Activated naive CD4-positive, alpha-beta T cell treated with anti-CD3 and anti-CD28 coated beads for 36 hours (primary cell): ENCODE measurements at regions of chr15 and their contacts with region 1.

Region 1: GRCh38 chr15:42010434-42010833 is 10.4 kb downstream of the PLA2G4E start:
- DNase-seq: peak; percentile 61
- H3K4me3 Mint-ChIP-seq: no peak overlapping the region
- H3K27ac Mint-ChIP-seq: peak overlapping the region; percentile 38
- H3K4me1 Mint-ChIP-seq: peaks cover 25% of the 10 kb centered on the region
- H3K27me3 Mint-ChIP-seq: no peaks in the 10 kb centered on the region

Region 2: GRCh38 chr15:42035435-42035761 is 25.0 kb after region 1 on chr15:
- CTCF ChIA-PET with region 1: no interaction called
- intact Hi-C with region 1: loop called (anchors 2 kb)
- DNase-seq: peak; percentile 73
- H3K4me3 Mint-ChIP-seq: peak overlapping the region; percentile 3
- H3K27ac Mint-ChIP-seq: peak overlapping the region; percentile 34
- H3K4me1 Mint-ChIP-seq: peaks cover 19% of the 10 kb centered on the region
- H3K27me3 Mint-ChIP-seq: no peaks in the 10 kb centered on the region